ENCODE measurements at regions of chr14 and their contacts with region 1.

Region 1: GRCh38 chr14:65637780-65638179 is 225.2 kb downstream of the FUT8 start:
- DNase-seq: peak; percentile 68
- H3K4me3 Mint-ChIP-seq: no peak overlapping the region
- H3K27ac Mint-ChIP-seq: no peak overlapping the region
- H3K4me1 Mint-ChIP-seq: peaks cover 36% of the 10 kb centered on the region
- H3K27me3 Mint-ChIP-seq: no peaks in the 10 kb centered on the region

Region 2: GRCh38 chr14:64191756-64192155 is 1446.0 kb before region 1 on chr14:
- CTCF ChIA-PET with region 1: no interaction called
- POLR2A ChIA-PET with region 1: no interaction called
- intact Hi-C with region 1: no loop called
- DNase-seq: no peak
- H3K4me3 Mint-ChIP-seq: no peak overlapping the region
- H3K27ac Mint-ChIP-seq: no peak overlapping the region
- H3K4me1 Mint-ChIP-seq: peaks cover 38% of the 10 kb centered on the region
- H3K27me3 Mint-ChIP-seq: no peaks in the 10 kb centered on the region

Region 3: GRCh38 chr14:65565948-65566347 is 71.8 kb before region 1 on chr14:
- CTCF ChIA-PET with region 1: no interaction called
- POLR2A ChIA-PET with region 1: no interaction called
- intact Hi-C with region 1: loop called (anchors 10 kb)
- DNase-seq: no peak
- H3K4me3 Mint-ChIP-seq: no peak overlapping the region
- H3K27ac Mint-ChIP-seq: no peak overlapping the region
- H3K4me1 Mint-ChIP-seq: peaks cover 42% of the 10 kb centered on the region
- H3K27me3 Mint-ChIP-seq: no peaks in the 10 kb centered on the region